Transverse colon (tissue), 4 donors: ENCODE measurements at regions of chr4 and their contacts with region 1.

Region 1: DNA sequence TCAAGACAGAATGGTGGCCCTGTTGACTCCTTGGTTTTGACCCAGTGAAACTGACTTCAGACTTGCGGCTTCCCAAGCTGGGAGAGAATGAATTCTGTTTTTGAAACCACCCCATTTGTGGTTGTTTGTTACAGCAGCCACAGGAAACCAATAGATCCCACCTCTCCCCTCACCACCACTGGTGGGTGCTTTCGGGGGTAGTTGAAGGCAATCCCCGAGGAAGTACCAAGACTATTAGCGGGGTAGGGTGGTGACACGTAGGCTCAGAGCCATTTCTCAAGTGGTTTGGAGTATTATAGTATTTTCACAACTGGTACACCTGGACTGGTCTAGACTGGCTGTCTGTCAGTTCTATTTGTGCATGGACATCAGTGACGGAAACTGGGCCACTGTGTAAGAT is 189.1 kb upstream of the RBPJ start:
- DNase-seq: no peak
- H3K4me3 ChIP-seq: no peak overlapping the region
- H3K27ac ChIP-seq: no peak overlapping the region
- H3K4me1 ChIP-seq: peaks cover 0 to 5% (median 0%) of the 10 kb centered on the region in 4 donors
- H3K27me3 ChIP-seq: no peaks in the 10 kb centered on the region
- CTCF ChIP-seq: no peak
- EP300 ChIP-seq: no peak
- POLR2A ChIP-seq: no peak

Region 2: DNA sequence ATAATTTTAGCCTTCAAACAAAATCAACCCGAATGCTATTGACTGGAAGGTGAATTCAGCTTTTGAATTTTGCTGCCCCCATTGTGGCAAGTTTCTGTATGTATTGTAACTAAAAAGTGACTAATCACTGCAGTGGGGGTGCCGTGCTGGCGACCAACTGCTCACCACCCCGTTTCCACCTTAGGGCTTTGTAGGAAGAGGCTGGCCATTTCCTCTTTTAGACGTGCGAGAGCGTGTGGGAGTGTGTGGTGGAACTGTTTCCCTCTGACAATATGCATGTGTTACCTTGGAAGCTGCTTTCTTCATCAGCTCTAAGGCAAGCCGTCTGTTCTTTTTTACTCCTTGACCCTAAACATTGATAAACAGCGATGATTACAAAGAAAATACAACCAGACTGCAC is 347.8 kb before region 1 on chr4:
- in situ Hi-C with region 1: no loop called
- intact Hi-C with region 1: no loop called
- DNase-seq: no peak
- H3K4me3 ChIP-seq: no peak overlapping the region
- H3K27ac ChIP-seq: no peak overlapping the region
- H3K4me1 ChIP-seq: no peaks in the 10 kb centered on the region
- H3K27me3 ChIP-seq: no peaks in the 10 kb centered on the region
- CTCF ChIP-seq: no peak
- EP300 ChIP-seq: no peak
- POLR2A ChIP-seq: no peak

Region 3: GRCh38 chr4:26116092-26116491 is 15.6 kb before region 1 on chr4:
- in situ Hi-C with region 1: no loop called
- intact Hi-C with region 1: loop called (anchors 1 kb)
- DNase-seq: no peak
- H3K4me3 ChIP-seq: no peak overlapping the region
- H3K27ac ChIP-seq: no peak overlapping the region
- H3K4me1 ChIP-seq: no peaks in the 10 kb centered on the region
- H3K27me3 ChIP-seq: no peaks in the 10 kb centered on the region
- CTCF ChIP-seq: no peak
- EP300 ChIP-seq: no peak
- POLR2A ChIP-seq: no peak